Heart left ventricle (tissue), 16 donors: ENCODE measurements at regions of chr19 and their contacts with region 1.

Region 1: DNA sequence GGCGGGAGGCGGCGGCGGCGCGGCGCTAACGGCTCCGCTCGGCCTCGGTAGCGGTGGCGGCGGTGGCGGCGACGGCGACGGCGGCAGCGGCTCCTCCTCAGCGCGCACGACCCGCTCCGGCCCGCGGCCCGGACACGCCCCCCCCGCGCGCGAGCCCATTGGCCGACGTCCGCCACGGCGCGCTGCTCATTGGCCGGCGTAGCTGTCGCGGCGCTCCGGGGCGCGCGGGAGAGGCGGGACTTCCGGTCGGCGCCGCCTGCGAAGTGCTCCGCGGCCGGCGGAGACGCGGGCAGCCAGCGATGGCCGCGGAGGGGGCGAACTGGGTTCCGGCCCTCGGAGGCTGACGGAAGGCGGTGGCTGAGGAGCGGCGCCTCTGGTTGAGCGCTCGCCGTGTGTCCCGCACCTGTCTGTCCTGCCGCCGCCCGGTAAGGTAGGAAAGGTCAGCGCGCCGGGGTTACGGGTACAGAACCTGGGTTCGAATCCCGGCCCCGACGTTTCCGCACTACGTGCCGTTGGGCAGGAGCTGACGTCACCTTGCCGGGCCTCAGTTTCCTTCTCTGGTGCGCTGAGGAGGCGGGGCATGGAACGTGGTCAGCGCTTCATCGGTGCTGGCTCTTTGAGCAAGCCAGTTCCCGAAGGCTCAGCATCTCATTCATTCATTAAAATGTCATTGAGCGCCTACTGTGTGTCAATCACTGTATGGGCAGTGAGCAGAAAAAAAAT is at the start of gene ELAVL1:
- DNase-seq: peak; percentile 91 to 96 (median 92)
- ATAC-seq: peak; percentile 80 to 94 (median 92)
- H3K4me3 ChIP-seq: peak within 1 kb of the TSS; percentile 59 to 99 (median 83)
- H3K27ac ChIP-seq: peak within 1 kb of the TSS; percentile 53 to 88 (median 84)
- H3K4me1 ChIP-seq: peaks cover 6 to 52% (median 45%) of the 10 kb centered on the region in 12 donors
- H3K27me3 ChIP-seq: no peaks in the 10 kb centered on the region
- CTCF ChIP-seq: peak in 1 of 12 donors; percentile 11
- POLR2A ChIP-seq: peak in 1 of 2 donors; percentile 67
- total RNA-seq, gene ELAVL1: 31.4 to 62.0 (median 53.4) TPM

Region 2: DNA sequence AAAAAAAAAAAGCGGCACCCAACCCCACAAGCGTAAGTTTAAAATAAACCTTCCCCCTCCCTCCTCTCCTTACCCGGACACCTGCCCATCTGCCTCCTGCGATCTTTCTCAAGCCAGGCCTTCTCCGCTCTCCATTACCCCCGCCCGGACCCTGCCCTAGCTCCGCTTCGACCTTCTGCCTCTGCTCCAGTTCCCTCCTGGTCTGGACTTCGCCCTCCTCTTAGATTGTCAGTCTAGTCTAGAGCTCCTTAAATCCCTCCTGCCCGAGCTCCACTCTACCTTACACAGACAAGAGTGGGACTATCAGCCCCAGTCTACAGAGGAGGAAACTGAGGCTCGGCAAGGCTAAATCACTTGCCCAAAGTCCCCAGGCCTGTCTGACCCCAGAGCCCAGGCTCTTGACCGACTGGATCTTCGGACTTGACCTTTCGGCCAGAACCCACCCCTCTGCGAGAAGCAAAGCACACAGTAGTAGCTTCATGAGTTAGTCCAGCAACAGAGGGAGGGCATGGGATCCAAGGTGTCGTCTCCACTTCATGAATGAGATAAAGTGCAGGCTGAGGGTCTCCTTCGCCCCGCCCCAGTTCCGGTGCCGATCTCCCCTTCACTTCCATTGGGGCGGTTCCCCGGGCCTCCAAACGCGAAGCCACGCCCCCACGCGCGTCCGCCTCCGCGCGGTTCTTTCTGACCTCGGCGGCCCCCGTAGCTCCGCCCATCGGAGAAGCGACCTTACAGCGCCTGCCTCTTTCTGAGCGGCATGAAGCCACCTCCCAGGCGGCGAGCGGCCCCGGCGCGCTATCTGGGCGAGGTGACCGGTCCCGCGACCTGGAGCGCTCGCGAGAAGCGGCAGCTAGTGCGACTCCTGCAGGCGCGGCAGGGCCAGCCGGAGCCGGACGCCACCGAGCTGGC is 85.8 kb before region 1 on chr19 and contains the start of gene SNAPC2:
- intact Hi-C with region 1: no loop called
- DNase-seq: peak; percentile 96 to 98 (median 98)
- ATAC-seq: peak; percentile 32 to 75 (median 68)
- H3K4me3 ChIP-seq: peak within 1 kb of the TSS; percentile 52 to 98 (median 79)
- H3K27ac ChIP-seq: peak within 1 kb of the TSS; percentile 70 to 97 (median 90)
- H3K4me1 ChIP-seq: peaks cover 5 to 63% (median 38%) of the 10 kb centered on the region in 12 donors
- H3K27me3 ChIP-seq: peaks cover 16 to 46% (median 32%) of the 10 kb centered on the region in 9 donors
- CTCF ChIP-seq: peak in 2 of 12 donors; percentile 10 to 14
- POLR2A ChIP-seq: peak in 1 of 2 donors; percentile 74
- total RNA-seq, gene SNAPC2: 6.8 to 16.7 (median 9.3) TPM

Region 3: GRCh38 chr19:7943444-7944176 is 62.1 kb before region 1 on chr19 and contains the start of gene TIMM44:
- intact Hi-C with region 1: loop called (anchors 1 to 5 kb)
- DNase-seq: peak; percentile 99 to 100 (median 100)
- ATAC-seq: peak; percentile 98 to 100 (median 99)
- H3K4me3 ChIP-seq: peak within 1 kb of the TSS; percentile 52 to 100 (median 86)
- H3K27ac ChIP-seq: peak within 1 kb of the TSS; percentile 83 to 99 (median 94)
- H3K4me1 ChIP-seq: peaks cover 0 to 25% (median 15%) of the 10 kb centered on the region in 12 donors
- H3K27me3 ChIP-seq: no peaks in the 10 kb centered on the region
- CTCF ChIP-seq: peak in 1 of 12 donors; percentile 8
- POLR2A ChIP-seq: peak in 1 of 2 donors; percentile 85
- total RNA-seq, gene TIMM44: 55.9 to 99.9 (median 70.6) TPM

Region 4: DNA sequence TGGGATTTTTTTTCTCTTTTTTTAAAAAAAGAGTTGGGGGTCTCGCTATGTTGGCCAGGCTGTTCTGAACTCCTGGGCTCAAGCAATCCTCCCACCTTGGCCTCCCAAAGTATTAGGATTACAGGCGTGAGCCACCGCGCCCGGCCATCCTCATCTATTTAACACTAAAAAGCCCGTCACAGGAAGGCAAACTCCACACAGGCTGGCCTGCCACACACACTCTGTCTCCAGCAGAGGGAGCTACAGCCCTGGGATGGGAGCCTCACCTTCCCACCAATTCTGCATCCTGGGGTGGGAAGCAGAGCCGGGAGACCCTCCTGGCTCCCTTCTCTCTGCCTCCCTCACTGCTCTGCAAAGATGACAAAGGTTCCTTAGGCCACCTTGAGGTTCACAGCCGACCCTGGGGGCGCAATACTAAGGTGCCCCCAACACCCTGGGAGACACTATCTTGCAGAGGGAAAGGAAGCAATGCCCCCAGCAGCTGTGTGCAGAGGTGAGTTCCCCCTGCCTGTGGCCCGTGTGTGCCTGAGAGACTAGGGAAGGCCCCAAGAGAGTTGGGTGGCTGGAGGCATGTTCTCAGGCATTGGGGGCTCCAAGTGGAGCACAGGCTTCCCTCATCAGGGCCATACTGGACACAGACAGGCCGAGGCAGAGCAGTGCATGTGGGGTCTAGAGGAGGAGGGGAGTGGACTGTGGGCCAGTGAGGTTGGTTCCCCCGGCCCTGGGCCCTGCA is 34.8 kb before region 1 on chr19:
- intact Hi-C with region 1: loop called in 4 of 10 experiments (anchors 2 to 5 kb)
- DNase-seq: peak in 1 of 5 donors; percentile 48
- ATAC-seq: no peak
- H3K4me3 ChIP-seq: no peak overlapping the region
- H3K27ac ChIP-seq: no peak overlapping the region
- H3K4me1 ChIP-seq: peaks cover 0 to 30% (median 8%) of the 10 kb centered on the region in 12 donors
- H3K27me3 ChIP-seq: no peaks in the 10 kb centered on the region
- CTCF ChIP-seq: peak; percentile 57 to 78 (median 66)
- POLR2A ChIP-seq: no peak

Region 5: GRCh38 chr19:8132858-8133458 is 127.3 kb after region 1 on chr19:
- intact Hi-C with region 1: no loop called
- DNase-seq: no peak
- ATAC-seq: no peak
- H3K4me3 ChIP-seq: no peak overlapping the region
- H3K27ac ChIP-seq: no peak overlapping the region
- H3K4me1 ChIP-seq: no peaks in the 10 kb centered on the region
- H3K27me3 ChIP-seq: peaks cover 0 to 8% (median 0%) of the 10 kb centered on the region in 9 donors
- CTCF ChIP-seq: no peak
- POLR2A ChIP-seq: no peak

Region 6: DNA sequence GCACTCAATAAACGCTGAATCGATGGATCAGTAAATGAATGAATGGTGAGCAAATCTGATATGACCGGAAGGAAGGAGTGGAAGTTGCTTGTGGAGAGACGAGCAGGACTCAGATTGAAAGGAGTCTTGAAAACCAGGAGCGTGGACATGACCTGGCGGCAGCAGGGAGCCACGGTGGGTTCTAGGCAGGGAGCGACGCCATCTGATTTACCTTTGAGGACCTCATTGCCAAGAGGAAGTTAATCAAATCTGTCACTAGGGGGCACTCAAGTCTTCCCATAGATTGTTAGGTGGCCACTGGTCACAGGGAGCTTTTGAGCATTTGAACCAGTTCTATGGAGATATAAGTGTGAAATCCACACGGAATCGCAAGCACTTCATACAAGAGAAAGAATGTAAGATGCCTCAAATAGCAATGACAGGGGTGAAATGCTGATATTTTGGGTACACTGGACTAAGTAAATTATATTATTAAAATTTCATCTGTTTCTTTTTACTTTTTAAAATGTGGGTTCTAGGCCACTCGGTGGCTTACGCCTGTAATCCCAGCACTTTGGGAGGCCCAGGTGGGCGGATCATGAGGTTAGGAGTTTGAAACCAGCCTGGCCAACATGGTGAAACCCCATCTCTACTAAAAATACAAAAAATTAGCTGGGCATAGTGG is 152.8 kb after region 1 on chr19:
- intact Hi-C with region 1: loop called in 1 of 10 experiments (anchors 5 kb)
- DNase-seq: peak in 4 of 5 donors; percentile 42 to 61 (median 50)
- ATAC-seq: peak; percentile 40 to 67 (median 60)
- H3K4me3 ChIP-seq: no peak overlapping the region
- H3K27ac ChIP-seq: no peak overlapping the region
- H3K4me1 ChIP-seq: peaks cover 0 to 15% (median 9%) of the 10 kb centered on the region in 12 donors
- H3K27me3 ChIP-seq: no peaks in the 10 kb centered on the region
- CTCF ChIP-seq: peak; percentile 59 to 81 (median 75)
- POLR2A ChIP-seq: no peak